AG04450 (cell line): ENCODE measurements at regions of chr18 and their contacts with region 1.

Region 1: DNA sequence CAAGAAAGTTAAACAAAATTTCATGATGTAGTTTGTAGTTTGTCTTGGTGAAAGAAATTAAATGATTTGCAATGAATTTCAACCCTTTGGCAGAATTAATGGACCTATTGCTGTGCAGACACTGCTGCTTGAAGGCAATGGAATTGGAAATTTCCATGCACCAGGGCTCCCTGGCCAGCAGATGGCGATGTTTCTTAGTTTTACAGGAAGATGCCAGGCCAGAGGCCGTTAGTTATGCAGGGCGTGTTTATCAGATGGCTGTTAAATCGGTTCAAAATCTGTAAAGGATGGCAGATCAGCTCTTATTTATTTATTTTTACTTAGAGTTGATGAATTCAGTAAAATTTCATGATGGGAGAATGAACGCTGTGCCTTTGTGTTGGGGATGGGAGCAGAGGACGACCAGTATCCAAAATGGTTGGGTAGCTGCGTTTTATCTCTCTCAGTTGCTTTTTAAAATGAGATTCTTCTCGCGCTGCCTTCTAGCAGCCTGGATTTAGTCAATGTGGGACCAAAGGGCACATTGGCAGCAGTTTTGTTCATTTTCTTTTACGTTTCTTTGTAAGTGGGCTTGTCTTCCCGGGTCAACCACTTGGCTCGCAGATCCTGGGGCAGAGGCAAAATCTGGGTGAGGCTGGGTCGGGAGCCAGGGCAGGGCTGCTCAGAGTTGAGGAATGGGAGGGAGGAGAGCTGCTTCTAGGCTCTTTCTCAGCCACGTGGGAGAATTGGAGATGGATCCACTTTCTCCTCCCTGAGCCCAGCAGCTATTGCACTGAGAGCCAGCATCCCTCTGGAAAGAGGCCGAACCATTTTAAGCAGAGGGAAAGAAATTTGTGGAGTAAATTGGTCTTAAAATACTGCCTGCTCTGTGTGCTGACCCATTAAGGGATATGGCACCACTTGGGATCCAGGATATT is 344.0 kb downstream of the PIK3C3 start:
- DNase-seq: peak; percentile 33
- H3K4me3 ChIP-seq: no peak overlapping the region
- H3K27ac ChIP-seq: no peak overlapping the region
- H3K27me3 ChIP-seq: no peaks in the 10 kb centered on the region
- CTCF ChIP-seq: peak; percentile 88

Region 2: DNA sequence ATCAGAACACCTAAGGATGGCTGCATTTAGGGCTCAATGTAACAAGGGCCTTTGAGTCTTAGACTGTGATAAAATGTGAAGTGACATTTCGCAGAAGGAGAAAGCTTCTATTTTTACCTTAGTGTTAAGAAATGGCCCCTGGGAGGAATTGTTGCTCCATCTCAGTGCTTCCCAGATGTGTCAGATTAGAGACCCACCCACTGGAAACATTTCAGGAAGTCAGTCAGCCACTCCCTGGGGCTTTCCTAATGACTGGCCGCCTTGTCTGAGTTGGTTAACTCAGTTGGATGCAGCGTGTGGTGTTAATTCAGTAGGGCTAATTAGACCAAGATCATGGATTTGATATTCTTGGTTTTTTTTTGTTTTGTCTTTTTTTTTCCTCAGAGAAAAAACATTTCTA is 11.9 kb after region 1 on chr18:
- CTCF ChIA-PET with region 1: interaction called, 10 read pairs
- POLR2A ChIA-PET with region 1: no interaction called
- DNase-seq: no peak
- H3K4me3 ChIP-seq: no peak overlapping the region
- H3K27ac ChIP-seq: no peak overlapping the region
- H3K27me3 ChIP-seq: no peaks in the 10 kb centered on the region
- CTCF ChIP-seq: no peak

Region 3: GRCh38 chr18:43271593-43272432 is 972.8 kb after region 1 on chr18:
- CTCF ChIA-PET with region 1: interaction called, 39 read pairs
- POLR2A ChIA-PET with region 1: no interaction called
- DNase-seq: peak; percentile 6
- H3K4me3 ChIP-seq: no peak overlapping the region
- H3K27ac ChIP-seq: no peak overlapping the region
- H3K27me3 ChIP-seq: no peaks in the 10 kb centered on the region
- CTCF ChIP-seq: peak; percentile 78